Dorsolateral prefrontal cortex (tissue), 120 donors: ENCODE measurements at regions of chr17 and their contacts with region 1.

Region 1: DNA sequence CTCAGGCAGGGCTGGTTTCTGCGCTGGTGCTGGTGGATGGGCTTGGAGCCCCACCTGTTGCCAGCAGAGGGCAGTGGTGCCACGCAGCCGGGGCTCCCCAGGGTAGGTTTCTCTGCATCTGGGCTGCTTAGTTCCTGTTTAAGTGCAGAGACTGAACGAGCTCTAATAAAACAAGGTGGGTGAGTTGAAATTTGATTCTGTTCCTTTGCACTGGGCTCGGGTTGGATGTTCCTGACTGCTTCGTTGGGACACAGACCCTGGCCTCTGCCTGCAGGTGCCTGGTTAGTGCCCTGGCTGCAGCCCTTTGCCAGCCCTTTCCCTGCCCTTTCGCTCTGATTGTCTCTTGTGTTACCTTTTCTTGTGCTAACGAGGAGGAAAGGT is 30.0 kb downstream of the TBCD start:
- DNase-seq: peak; percentile 70 to 88 (median 79)
- H3K4me3 ChIP-seq: peak overlapping the region in 3 of 59 donors; percentile 20 to 24 (median 24)
- H3K27ac ChIP-seq: peak overlapping the region in 8 of 59 donors; percentile 16 to 72 (median 48)
- H3K27me3 ChIP-seq: no peaks in the 10 kb centered on the region
- CTCF ChIP-seq: peak; percentile 63 to 99 (median 95)

Region 2: GRCh38 chr17:82808921-82809905 is 27.3 kb after region 1 on chr17:
- intact Hi-C with region 1: no loop called
- DNase-seq: peak in 4 of 10 donors; percentile 21 to 49 (median 36)
- H3K4me3 ChIP-seq: no peak overlapping the region
- H3K27ac ChIP-seq: peak overlapping the region in 3 of 59 donors; percentile 18 to 34 (median 27)
- H3K27me3 ChIP-seq: no peaks in the 10 kb centered on the region
- CTCF ChIP-seq: no peak

Region 3: GRCh38 chr17:82913295-82914042 is 131.6 kb after region 1 on chr17:
- intact Hi-C with region 1: loop called (anchors 5 kb)
- DNase-seq: peak in 1 of 10 donors; percentile 68
- H3K4me3 ChIP-seq: no peak overlapping the region
- H3K27ac ChIP-seq: peak overlapping the region in 10 of 59 donors; percentile 41 to 76 (median 66)
- H3K27me3 ChIP-seq: no peaks in the 10 kb centered on the region
- CTCF ChIP-seq: peak in 52 of 56 donors; percentile 15 to 60 (median 41)

Region 4: DNA sequence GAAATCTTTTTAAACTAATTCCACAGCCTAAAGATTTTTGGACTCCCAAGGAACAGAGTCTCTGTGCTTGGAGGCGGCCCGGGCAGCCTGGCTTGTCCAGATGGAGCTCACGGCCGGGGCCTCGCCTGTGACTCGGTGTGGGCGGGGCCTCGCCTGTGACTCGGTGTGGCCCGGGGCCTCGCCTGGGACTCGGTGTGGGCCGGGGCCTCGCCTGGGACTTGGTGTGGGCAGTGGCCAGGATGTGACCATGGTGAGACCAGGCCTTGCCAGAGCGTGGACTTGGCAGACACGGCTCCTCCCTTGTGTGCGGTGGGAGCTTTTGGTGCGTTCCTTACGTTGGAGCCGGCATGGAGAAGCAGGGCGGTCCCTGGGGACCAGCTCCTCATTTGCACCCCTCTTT is 389.8 kb after region 1 on chr17:
- intact Hi-C with region 1: no loop called
- DNase-seq: peak in 2 of 10 donors; percentile 29 to 39
- H3K4me3 ChIP-seq: no peak overlapping the region
- H3K27ac ChIP-seq: no peak overlapping the region
- H3K27me3 ChIP-seq: peaks cover 0 to 22% (median 0%) of the 10 kb centered on the region in 45 donors
- CTCF ChIP-seq: no peak